Motor neuron (in vitro differentiated cells): ENCODE measurements at regions of chr2 and their contacts with region 1.

Region 1: GRCh38 chr2:131673392-131674173 is 145.9 kb downstream of the CCDC74A start:
- ATAC-seq: peak; percentile 68 to 95 (median 90)
- H3K4me3 ChIP-seq: peak overlapping the region; percentile 30 to 40 (median 35)
- H3K27ac ChIP-seq: no peak overlapping the region
- H3K4me1 ChIP-seq: peaks cover 0 to 9% of the 10 kb centered on the region in 2 donors

Region 2: DNA sequence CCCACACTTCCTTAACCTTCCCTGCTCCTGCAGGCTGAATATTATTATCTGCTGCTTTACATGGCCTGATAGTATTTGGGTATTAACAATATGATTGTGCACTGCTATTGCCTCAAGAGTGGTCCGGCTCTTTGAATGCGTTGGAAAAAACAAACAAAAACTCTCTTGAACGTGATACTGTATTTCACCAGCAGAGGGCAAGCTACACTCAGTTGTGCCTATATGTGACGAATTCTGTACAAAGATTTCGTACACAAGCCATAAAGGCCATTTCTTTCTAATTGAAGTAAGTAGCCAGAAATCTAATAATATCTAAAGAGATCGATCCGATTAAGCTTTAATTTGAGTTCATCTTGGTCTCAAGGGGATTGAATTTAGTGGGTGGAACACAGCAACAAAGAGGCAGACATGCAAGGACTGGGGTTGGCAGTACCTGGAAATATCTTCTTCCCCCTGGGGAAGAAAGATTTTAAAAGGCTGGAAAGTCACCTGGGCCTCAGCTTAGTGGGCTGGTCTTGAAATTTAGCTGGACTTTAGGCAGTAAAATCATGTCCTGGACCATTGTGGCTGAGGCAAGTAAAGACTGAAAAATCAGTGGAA is 260.3 kb before region 1 on chr2:
- in situ Hi-C with region 1: loop called in 1 of 9 experiments (anchors 25 kb)
- ATAC-seq: peak; percentile 42 to 78 (median 64)
- H3K4me3 ChIP-seq: no peak overlapping the region
- H3K27ac ChIP-seq: no peak overlapping the region
- H3K4me1 ChIP-seq: no peaks in the 10 kb centered on the region

Region 3: GRCh38 chr2:132374551-132374950 is 701.0 kb after region 1 on chr2:
- in situ Hi-C with region 1: no loop called
- ATAC-seq: peak in 4 of 8 experiments; percentile 18 to 48 (median 31)
- H3K4me3 ChIP-seq: no peak overlapping the region
- H3K27ac ChIP-seq: no peak overlapping the region
- H3K4me1 ChIP-seq: no peaks in the 10 kb centered on the region